K562 (cell line): ENCODE measurements at regions of chr11 and their contacts with region 1.

Region 1: DNA sequence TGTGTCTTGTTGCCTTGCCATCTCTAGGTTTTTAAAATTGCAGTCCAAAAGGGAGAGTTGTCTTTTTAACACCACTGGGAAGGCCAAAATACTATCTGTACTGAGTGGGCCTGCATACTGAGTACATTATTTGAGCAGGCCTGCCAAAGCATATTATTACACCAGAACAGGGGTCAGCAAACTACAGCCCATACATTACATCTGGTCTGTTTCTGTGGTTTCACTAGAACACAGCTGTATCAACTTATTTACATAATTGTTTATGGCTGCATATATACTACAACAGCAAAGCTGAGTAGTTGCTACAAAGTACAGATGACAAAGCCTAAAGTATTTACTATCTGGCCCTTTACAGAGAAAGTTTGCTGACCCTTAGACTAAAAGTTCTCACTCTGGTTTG is 74.0 kb downstream of the USP35 start:
- DNase-seq: no peak
- ATAC-seq: peak; percentile 5; the same call in 1 of the 3 replicates
- H3K4me3 ChIP-seq: no peak overlapping the region
- H3K27ac ChIP-seq: peak overlapping the region; percentile 14; the same call in 1 of the 3 replicates
- H3K4me1 ChIP-seq: peaks cover 13 to 49% of the 10 kb centered on the region in 2 experiments
- H3K27me3 ChIP-seq: no peaks in the 10 kb centered on the region
- CTCF ChIP-seq: no peak
- EP300 ChIP-seq: no peak
- POLR2A ChIP-seq: no peak
- RAD21 ChIP-seq: no peak

Region 2: DNA sequence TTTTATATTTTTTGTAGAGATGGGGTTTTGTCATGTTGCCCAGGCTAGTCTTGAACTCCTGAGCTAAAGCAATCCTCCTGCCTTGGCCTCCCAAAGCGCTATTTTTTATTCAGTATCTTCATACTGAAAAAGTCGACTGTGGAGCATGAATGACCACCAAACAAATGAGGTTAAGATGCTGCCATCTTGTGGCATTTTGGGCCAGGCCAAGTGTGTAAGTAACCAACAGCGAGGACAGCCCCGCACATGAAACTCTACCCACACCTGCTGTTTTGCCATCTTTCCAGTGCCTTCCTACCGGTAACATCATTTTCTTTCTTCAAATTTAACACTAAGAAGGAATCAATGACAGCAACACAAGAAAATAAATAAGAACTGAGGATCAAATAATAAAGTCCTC is 705.1 kb before region 1 on chr11:
- CTCF ChIA-PET with region 1: no interaction called
- POLR2A ChIA-PET with region 1: no interaction called
- in situ Hi-C with region 1: no loop called
- intact Hi-C with region 1: no loop called
- DNase-seq: peak in 1 of 4 experiments; percentile 38
- ATAC-seq: peak; percentile 76
- H3K4me3 ChIP-seq: no peak overlapping the region
- H3K27ac ChIP-seq: no peak overlapping the region
- H3K4me1 ChIP-seq: peaks cover 4 to 7% of the 10 kb centered on the region in 2 experiments; a peak in 1 of 5 replicates
- H3K27me3 ChIP-seq: no peaks in the 10 kb centered on the region
- CTCF ChIP-seq: peak; percentile 39 to 43 (median 40)
- EP300 ChIP-seq: no peak
- POLR2A ChIP-seq: no peak
- RAD21 ChIP-seq: peak in 1 of 2 experiments; percentile 49; a peak in 2 of 4 replicates

Region 3: DNA sequence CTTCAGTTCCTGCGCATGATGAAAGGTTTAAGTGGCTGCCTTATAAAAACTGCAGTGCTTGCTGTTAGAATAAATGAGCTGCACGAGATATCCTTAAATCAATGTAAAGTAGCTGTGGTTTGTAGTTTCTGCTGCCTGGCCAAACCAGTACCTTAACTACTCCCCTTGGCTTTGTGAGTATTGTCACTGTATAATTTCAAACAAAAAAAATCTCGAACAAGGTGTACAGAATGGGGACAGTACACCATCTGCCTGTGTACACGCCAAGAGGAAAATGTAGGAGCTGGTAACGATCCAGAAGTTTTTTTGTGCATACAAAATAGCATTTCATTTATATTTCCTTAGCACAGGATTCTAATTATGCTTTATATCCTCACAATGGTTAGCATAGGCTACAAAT is 162.4 kb before region 1 on chr11:
- CTCF ChIA-PET with region 1: no interaction called
- POLR2A ChIA-PET with region 1: no interaction called
- in situ Hi-C with region 1: no loop called
- intact Hi-C with region 1: no loop called
- DNase-seq: no peak
- ATAC-seq: no peak
- H3K4me3 ChIP-seq: no peak overlapping the region
- H3K27ac ChIP-seq: no peak overlapping the region
- H3K4me1 ChIP-seq: no peaks in the 10 kb centered on the region
- H3K27me3 ChIP-seq: no peaks in the 10 kb centered on the region
- CTCF ChIP-seq: no peak
- EP300 ChIP-seq: no peak
- POLR2A ChIP-seq: no peak
- RAD21 ChIP-seq: no peak

Region 4: GRCh38 chr11:78251083-78251775 is 11.5 kb before region 1 on chr11:
- CTCF ChIA-PET with region 1: no interaction called
- POLR2A ChIA-PET with region 1: interaction called, 26 read pairs
- in situ Hi-C with region 1: no loop called
- intact Hi-C with region 1: no loop called
- DNase-seq: no peak
- ATAC-seq: peak; percentile 30
- H3K4me3 ChIP-seq: no peak overlapping the region
- H3K27ac ChIP-seq: no peak overlapping the region
- H3K4me1 ChIP-seq: peaks cover under 1 to 6% of the 10 kb centered on the region in 2 experiments; a peak in 4 of 5 replicates
- H3K27me3 ChIP-seq: no peaks in the 10 kb centered on the region
- CTCF ChIP-seq: no peak
- EP300 ChIP-seq: no peak
- POLR2A ChIP-seq: no peak
- RAD21 ChIP-seq: no peak